ENCODE measurements at regions of chr22 and their contacts with region 1.

Region 1: DNA sequence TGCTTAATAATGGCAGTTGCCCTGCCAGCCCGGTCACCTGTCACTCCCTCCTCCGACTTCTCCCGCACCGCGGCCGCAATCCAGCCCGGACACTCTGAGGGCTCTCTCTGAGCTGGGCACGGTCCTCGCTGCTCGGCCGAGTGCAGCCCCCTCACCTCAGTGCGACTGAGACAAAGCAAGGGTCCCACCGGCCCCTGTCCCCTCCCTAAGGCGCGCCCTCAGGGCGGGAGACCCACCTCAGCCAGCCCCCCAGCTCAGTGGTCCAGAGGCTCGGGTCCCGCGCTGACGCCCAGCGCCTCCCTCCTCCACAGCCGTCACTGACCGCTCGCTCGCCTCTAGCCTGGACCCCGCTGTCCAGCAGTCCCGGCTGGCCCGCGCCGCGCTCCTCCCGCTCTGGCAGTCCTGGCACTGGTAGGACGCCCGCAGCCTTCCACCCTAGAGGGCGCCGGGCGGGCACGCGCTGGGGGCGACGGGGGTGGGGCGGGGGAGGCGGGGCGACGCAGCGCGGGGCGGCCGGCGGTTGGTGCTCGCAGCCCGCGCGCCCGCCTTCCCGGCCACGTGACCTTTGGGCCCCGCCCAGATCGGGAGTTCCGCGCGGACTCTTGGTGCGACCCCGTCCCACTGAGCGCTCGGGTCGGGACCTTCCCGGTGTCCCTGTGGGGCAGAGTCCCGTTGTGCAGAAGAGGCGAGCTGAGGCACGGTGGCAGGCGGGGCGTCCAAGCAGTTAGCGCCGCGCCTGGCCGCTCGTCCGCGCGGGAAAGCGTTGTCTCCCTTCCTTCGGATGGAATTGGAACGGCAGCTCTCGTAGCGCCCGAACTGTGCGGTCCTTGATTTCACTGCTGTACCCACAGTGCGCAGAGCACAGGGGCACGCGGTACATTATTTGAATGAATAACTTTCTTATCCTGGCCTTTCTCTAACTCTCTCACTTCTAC is 7.8 kb upstream of the L3MBTL2 start:
- DNase-seq: peak; percentile 59
- ATAC-seq: peak; percentile 72
- H3K4me3 ChIP-seq: peak overlapping the region; percentile 78
- H3K27ac ChIP-seq: no peak overlapping the region
- H3K4me1 ChIP-seq: peaks cover 3% of the 10 kb centered on the region; the same call in 1 of the 2 replicates
- H3K27me3 ChIP-seq: no peaks in the 10 kb centered on the region
- CTCF ChIP-seq: no peak

Region 2: GRCh38 chr22:40766956-40767355 is 430.3 kb before region 1 on chr22:
- CTCF ChIA-PET with region 1: no interaction called
- POLR2A ChIA-PET with region 1: no interaction called
- intact Hi-C with region 1: no loop called
- DNase-seq: no peak
- ATAC-seq: no peak
- H3K4me3 ChIP-seq: no peak overlapping the region
- H3K27ac ChIP-seq: no peak overlapping the region
- H3K4me1 ChIP-seq: no peaks in the 10 kb centered on the region
- H3K27me3 ChIP-seq: no peaks in the 10 kb centered on the region
- CTCF ChIP-seq: no peak

Region 3: DNA sequence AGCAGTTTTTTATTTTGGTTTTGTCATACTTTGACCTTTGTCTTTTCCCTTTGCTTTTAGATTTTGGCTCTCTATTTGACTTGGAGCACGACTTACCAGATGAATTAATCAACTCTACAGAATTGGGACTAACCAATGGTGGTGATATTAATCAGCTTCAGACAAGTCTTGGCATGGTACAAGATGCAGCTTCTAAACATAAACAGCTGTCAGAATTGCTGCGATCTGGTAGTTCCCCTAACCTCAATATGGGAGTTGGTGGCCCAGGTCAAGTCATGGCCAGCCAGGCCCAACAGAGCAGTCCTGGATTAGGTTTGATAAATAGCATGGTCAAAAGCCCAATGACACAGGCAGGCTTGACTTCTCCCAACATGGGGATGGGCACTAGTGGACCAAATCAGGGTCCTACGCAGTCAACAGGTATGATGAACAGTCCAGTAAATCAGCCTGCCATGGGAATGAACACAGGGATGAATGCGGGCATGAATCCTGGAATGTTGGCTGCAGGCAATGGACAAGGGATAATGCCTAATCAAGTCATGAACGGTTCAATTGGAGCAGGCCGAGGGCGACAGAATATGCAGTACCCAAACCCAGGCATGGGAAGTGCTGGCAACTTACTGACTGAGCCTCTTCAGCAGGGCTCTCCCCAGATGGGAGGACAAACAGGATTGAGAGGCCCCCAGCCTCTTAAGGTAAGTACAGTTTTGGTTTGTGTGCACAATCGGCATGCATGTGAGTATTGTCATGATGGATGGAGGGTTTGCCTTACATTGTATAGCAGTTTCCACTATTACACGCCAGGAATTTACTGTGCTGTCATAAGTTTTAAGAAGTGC is 80.0 kb before region 1 on chr22:
- CTCF ChIA-PET with region 1: interaction called, 16 read pairs
- POLR2A ChIA-PET with region 1: no interaction called
- intact Hi-C with region 1: no loop called
- DNase-seq: no peak
- ATAC-seq: no peak
- H3K4me3 ChIP-seq: no peak overlapping the region
- H3K27ac ChIP-seq: no peak overlapping the region
- H3K4me1 ChIP-seq: no peaks in the 10 kb centered on the region
- H3K27me3 ChIP-seq: no peaks in the 10 kb centered on the region
- CTCF ChIP-seq: no peak

Region 4: DNA sequence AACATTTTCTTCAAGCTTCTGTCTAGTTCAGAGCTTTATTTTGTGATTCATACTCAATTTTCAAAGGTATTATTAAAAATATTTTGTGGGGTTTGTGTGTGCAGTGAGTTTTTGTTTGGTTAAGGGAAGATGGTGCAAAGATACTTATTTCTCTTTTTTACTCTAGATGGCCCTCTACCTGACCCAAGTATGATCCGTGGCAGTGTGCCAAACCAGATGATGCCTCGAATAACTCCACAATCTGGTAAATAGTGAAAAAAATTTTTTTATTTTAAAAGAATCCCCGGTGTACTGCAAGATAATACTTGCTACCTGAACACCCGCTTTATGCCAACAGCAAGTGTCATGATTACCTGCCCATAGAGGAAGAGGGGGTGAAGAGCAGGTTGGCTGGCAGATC is 50.7 kb before region 1 on chr22:
- CTCF ChIA-PET with region 1: no interaction called
- POLR2A ChIA-PET with region 1: no interaction called
- intact Hi-C with region 1: no loop called
- DNase-seq: no peak
- ATAC-seq: no peak
- H3K4me3 ChIP-seq: no peak overlapping the region
- H3K27ac ChIP-seq: no peak overlapping the region
- H3K4me1 ChIP-seq: no peaks in the 10 kb centered on the region
- H3K27me3 ChIP-seq: no peaks in the 10 kb centered on the region
- CTCF ChIP-seq: no peak

Region 5: GRCh38 chr22:41237707-41238569 is 40.6 kb after region 1 on chr22:
- CTCF ChIA-PET with region 1: interaction called, 17 read pairs
- POLR2A ChIA-PET with region 1: no interaction called
- intact Hi-C with region 1: no loop called
- DNase-seq: peak; percentile 71
- ATAC-seq: peak; percentile 80
- H3K4me3 ChIP-seq: peak overlapping the region; percentile 57
- H3K27ac ChIP-seq: no peak overlapping the region
- H3K4me1 ChIP-seq: 0 out of 2 replicates have a peak, but pooled peaks cover 3% of the 10 kb centered on the region
- H3K27me3 ChIP-seq: no peaks in the 10 kb centered on the region
- CTCF ChIP-seq: peak; percentile 60; the same call in 1 of the 2 replicates